ENCODE measurements at regions of chr1 and their contacts with region 1.

Region 1: GRCh38 chr1:93453911-93454310 is 6.0 kb downstream of the FNBP1L start:
- DNase-seq: no peak
- ATAC-seq: no peak
- H3K4me3 ChIP-seq: no peak overlapping the region
- H3K27ac ChIP-seq: no peak overlapping the region
- H3K4me1 ChIP-seq: peaks cover 0 to 18% (median 6%) of the 10 kb centered on the region in 12 donors
- H3K27me3 ChIP-seq: no peaks in the 10 kb centered on the region
- CTCF ChIP-seq: no peak
- POLR2A ChIP-seq: no peak

Region 2: GRCh38 chr1:93502561-93502960 is 48.6 kb after region 1 on chr1:
- intact Hi-C with region 1: loop called in 1 of 10 experiments (anchors 5 kb)
- DNase-seq: no peak
- ATAC-seq: no peak
- H3K4me3 ChIP-seq: no peak overlapping the region
- H3K27ac ChIP-seq: no peak overlapping the region
- H3K4me1 ChIP-seq: peaks cover 0 to 22% (median 2%) of the 10 kb centered on the region in 12 donors
- H3K27me3 ChIP-seq: no peaks in the 10 kb centered on the region
- CTCF ChIP-seq: no peak
- POLR2A ChIP-seq: no peak

Region 3: GRCh38 chr1:93552741-93553455 is 99.0 kb after region 1 on chr1:
- intact Hi-C with region 1: loop called in 7 of 10 experiments (anchors 5 to 10 kb)
- DNase-seq: peak in 2 of 5 donors; percentile 51 to 58
- ATAC-seq: peak; percentile 38 to 64 (median 48)
- H3K4me3 ChIP-seq: no peak overlapping the region
- H3K27ac ChIP-seq: peak overlapping the region; percentile 38 to 72 (median 64)
- H3K4me1 ChIP-seq: peaks cover 15 to 45% (median 35%) of the 10 kb centered on the region in 12 donors
- H3K27me3 ChIP-seq: no peaks in the 10 kb centered on the region
- CTCF ChIP-seq: no peak
- POLR2A ChIP-seq: no peak

Measured in heart left ventricle (tissue), 16 donors.